Breast epithelium (tissue), 4 donors: ENCODE measurements at regions of chr11 and their contacts with region 1.

Region 1: GRCh38 chr11:1792461-1792860 is 28.7 kb upstream of the CTSD start:
- DNase-seq: no peak
- H3K4me3 ChIP-seq: no peak overlapping the region
- H3K27ac ChIP-seq: no peak overlapping the region
- H3K4me1 ChIP-seq: no peaks in the 10 kb centered on the region
- H3K27me3 ChIP-seq: no peaks in the 10 kb centered on the region
- CTCF ChIP-seq: no peak
- POLR2A ChIP-seq: no peak

Region 2: GRCh38 chr11:1639102-1639620 is 153.3 kb before region 1 on chr11:
- intact Hi-C with region 1: loop called (anchors 5 kb)
- DNase-seq: no peak
- H3K4me3 ChIP-seq: no peak overlapping the region
- H3K27ac ChIP-seq: no peak overlapping the region
- H3K4me1 ChIP-seq: no peaks in the 10 kb centered on the region
- H3K27me3 ChIP-seq: peaks cover 0 to 26% of the 10 kb centered on the region in 2 donors
- CTCF ChIP-seq: no peak
- POLR2A ChIP-seq: no peak